ENCODE measurements at regions of chr13 and their contacts with region 1.

Region 1: GRCh38 chr13:28636674-28637317 is 22.1 kb upstream of the POMP start:
- DNase-seq: no peak
- H3K4me3 ChIP-seq: no peak overlapping the region
- CTCF ChIP-seq: peak; percentile 81

Region 2: GRCh38 chr13:28531077-28531844 is 105.5 kb before region 1 on chr13:
- CTCF ChIA-PET with region 1: interaction called, 14 read pairs
- POLR2A ChIA-PET with region 1: no interaction called
- DNase-seq: no peak
- H3K4me3 ChIP-seq: peak overlapping the region; percentile 56
- CTCF ChIP-seq: no peak

Region 3: DNA sequence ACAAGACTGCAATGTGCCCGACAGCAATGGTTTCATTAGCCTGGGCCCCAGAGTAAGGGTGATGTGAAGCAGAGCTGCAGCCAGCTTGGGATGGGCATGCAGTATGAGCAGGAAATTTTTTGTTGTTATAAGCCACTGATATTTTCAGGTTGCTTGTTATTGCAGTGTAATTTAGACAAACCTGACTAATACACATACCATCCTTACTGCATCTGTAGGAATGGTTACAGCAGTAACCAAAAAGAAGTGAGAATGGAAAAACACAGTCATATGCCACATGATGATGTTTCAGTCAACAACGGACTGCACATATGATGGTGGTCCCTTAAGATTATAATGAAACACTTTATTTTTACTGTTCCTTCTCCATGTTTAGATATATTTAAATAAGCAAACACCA is 13.5 kb after region 1 on chr13:
- CTCF ChIA-PET with region 1: interaction called, 12 read pairs
- POLR2A ChIA-PET with region 1: no interaction called
- DNase-seq: no peak
- H3K4me3 ChIP-seq: no peak overlapping the region
- CTCF ChIP-seq: no peak